Activated B cell treated with CpG ODN at 0.5 μM for 24 hours (primary cell): ENCODE measurements at regions of chr9 and their contacts with region 1.

Region 1: DNA sequence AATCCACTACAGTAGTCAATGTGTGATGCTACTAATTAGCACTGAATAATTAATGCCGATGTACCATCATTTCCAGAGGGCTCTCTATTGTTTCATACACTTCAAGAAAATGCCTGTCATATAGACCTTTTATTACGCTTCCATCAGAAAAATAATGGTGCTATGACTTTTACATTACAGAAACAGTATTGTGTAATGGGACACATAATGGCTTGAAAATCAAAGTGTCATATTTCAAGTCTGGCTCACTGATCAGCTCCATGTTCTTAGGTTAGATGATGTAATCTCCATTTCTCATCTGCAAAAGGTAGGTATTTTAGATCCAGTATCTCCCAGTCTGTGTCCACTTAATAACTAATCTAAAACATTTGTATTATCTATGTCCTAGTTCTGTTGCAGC is 990.6 kb upstream of the TYRP1 start:
- DNase-seq: no peak
- ATAC-seq: no peak
- H3K4me3 Mint-ChIP-seq: no peak overlapping the region
- H3K27ac Mint-ChIP-seq: no peak overlapping the region
- H3K4me1 Mint-ChIP-seq: no peaks in the 10 kb centered on the region
- H3K27me3 Mint-ChIP-seq: no peaks in the 10 kb centered on the region
- CTCF ChIP-seq: no peak

Region 2: DNA sequence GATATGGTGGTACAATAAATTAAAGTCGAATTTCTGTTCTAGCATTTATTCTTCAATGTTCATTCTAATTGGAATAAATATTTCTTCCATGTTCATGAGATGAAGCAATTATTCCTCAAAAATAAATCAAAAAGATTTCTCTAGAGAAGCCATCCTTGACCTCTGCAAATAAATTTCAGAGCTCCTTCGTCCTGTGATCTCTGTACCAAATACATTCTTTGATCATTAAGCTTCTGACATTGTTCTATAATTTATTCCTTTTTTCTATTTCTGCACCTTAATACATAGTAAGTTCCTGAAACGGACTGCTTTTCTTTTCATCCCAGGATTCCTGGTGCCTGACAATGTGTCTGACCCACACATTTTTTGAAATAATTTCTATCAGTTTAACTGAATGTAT is 48.7 kb before region 1 on chr9:
- CTCF ChIA-PET with region 1: no interaction called
- POLR2A ChIA-PET with region 1: no interaction called
- intact Hi-C with region 1: loop called (anchors 5 kb)
- DNase-seq: no peak
- ATAC-seq: no peak
- H3K4me3 Mint-ChIP-seq: no peak overlapping the region
- H3K27ac Mint-ChIP-seq: no peak overlapping the region
- H3K4me1 Mint-ChIP-seq: no peaks in the 10 kb centered on the region
- H3K27me3 Mint-ChIP-seq: no peaks in the 10 kb centered on the region
- CTCF ChIP-seq: no peak